ENCODE measurements at regions of chr6 and their contacts with region 1.

Region 1: GRCh38 chr6:16277101-16277981 is 39.0 kb downstream of the GMPR start:
- DNase-seq: no peak
- H3K4me3 ChIP-seq: no peak overlapping the region
- H3K27ac ChIP-seq: peak overlapping the region in 2 of 4 donors; percentile 1 to 24
- H3K4me1 ChIP-seq: peaks cover 27 to 34% (median 33%) of the 10 kb centered on the region in 4 donors
- H3K27me3 ChIP-seq: no peaks in the 10 kb centered on the region
- CTCF ChIP-seq: peak; percentile 19 to 41 (median 41)
- EP300 ChIP-seq: no peak
- POLR2A ChIP-seq: no peak

Region 2: DNA sequence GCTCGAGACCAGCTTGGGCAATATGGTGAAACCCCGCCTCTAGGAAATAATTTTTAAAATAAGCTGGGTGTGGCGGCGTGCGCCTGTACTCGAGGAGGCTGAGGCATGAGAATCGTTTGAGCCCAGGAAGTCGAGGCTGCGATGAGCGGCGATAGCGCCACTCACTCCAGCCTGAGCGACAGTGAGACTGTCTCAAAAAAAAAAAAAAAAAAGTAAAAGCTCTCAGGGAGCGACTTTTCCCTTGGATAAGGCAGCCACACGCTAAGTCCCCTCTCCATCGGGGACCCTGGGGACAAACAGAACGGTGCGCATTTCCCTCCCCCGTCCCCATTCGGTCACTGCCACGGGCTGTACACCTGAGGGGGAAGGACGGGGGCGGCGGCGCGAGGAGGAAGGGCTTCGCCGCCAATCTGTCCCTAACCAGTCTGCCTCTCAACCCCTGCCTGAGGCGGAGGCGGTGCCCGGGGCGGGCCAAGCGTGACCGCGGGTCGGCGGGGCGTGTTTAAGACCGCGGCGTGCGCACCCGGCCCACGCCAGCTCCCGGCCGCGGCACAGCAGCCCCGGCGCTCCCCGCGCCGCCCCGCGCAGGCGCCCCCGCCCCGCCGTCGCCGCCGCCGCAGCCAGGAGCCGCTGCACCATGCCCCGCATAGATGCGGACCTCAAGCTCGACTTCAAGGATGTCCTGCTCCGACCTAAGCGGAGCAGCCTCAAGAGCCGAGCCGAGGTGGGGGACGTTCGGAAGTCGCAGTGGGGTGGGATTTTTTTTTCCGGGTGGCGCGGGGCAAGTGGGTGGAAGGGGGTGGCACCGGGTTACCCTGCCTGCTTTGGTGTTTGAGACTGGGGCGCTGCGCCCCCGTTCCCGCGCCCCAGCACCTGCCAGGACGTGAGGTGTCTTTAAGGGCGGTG is 39.0 kb before region 1 on chr6 and contains the start of gene GMPR:
- intact Hi-C with region 1: loop called (anchors 2 kb)
- DNase-seq: no peak
- H3K4me3 ChIP-seq: peak within 1 kb of the TSS; percentile 70 to 84 (median 78)
- H3K27ac ChIP-seq: peak within 1 kb of the TSS; percentile 77 to 83 (median 79)
- H3K4me1 ChIP-seq: peaks cover 40 to 72% (median 66%) of the 10 kb centered on the region in 4 donors
- H3K27me3 ChIP-seq: no peaks in the 10 kb centered on the region
- CTCF ChIP-seq: peak in 2 of 3 experiments; percentile 7 to 24
- EP300 ChIP-seq: no peak
- POLR2A ChIP-seq: no peak
- total RNA-seq, gene GMPR: 32.8 to 69.7 (median 52.0) TPM